Uterus (tissue), 4 donors: ENCODE measurements at regions of chr3 and their contacts with region 1.

Region 1: DNA sequence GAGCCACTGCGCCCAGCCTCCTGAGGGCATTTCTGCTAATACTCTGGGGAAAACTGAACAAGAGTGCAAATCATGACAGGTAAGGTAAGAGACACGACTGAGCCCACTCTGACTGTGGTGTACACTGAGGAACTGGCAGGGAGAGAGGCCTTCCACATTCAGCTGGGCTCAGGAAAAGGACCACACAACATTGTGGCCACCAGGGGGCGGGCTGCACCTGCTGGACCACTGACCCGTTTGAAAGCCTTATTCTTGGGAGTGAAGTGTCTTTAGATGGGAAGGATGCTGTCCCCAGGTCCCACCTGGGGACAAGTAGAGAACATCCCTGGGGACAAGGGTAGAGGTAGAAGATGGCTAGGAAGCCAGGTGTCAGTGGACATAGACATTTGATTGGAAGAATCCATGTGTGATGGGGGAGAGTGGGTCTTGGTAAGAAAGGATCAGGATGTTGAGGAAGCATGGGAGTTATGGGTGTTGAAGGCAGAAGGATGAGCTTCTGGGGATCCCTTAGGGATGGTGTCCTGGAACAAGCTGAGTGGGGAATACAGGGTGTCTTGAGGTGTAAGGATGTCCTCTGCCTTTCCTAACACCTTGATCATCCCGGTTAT is 6.2 kb upstream of the CTDSPL start:
- DNase-seq: peak; percentile 86 to 87
- H3K4me3 ChIP-seq: no peak overlapping the region
- H3K27ac ChIP-seq: no peak overlapping the region
- H3K4me1 ChIP-seq: peaks cover 7% of the 10 kb centered on the region in 2 donors
- H3K27me3 ChIP-seq: no peaks in the 10 kb centered on the region
- CTCF ChIP-seq: peak; percentile 89 to 98 (median 92)
- POLR2A ChIP-seq: no peak

Region 2: GRCh38 chr3:37967260-37967881 is 111.9 kb after region 1 on chr3:
- intact Hi-C with region 1: loop called (anchors 2 kb)
- DNase-seq: peak; percentile 64 to 65
- H3K4me3 ChIP-seq: no peak overlapping the region
- H3K27ac ChIP-seq: no peak overlapping the region
- H3K4me1 ChIP-seq: peaks cover 0 to 9% of the 10 kb centered on the region in 2 donors
- H3K27me3 ChIP-seq: no peaks in the 10 kb centered on the region
- CTCF ChIP-seq: peak; percentile 75 to 78 (median 76)
- POLR2A ChIP-seq: no peak

Region 3: GRCh38 chr3:38004415-38005076 is 149.1 kb after region 1 on chr3:
- intact Hi-C with region 1: loop called (anchors 10 kb)
- DNase-seq: peak; percentile 67 to 74
- H3K4me3 ChIP-seq: no peak overlapping the region
- H3K27ac ChIP-seq: peak overlapping the region in 1 of 2 donors; percentile 21
- H3K4me1 ChIP-seq: no peaks in the 10 kb centered on the region
- H3K27me3 ChIP-seq: no peaks in the 10 kb centered on the region
- CTCF ChIP-seq: peak; percentile 48 to 62 (median 56)
- POLR2A ChIP-seq: no peak